ENCODE measurements at regions of chr18 and their contacts with region 1.

Region 1: DNA sequence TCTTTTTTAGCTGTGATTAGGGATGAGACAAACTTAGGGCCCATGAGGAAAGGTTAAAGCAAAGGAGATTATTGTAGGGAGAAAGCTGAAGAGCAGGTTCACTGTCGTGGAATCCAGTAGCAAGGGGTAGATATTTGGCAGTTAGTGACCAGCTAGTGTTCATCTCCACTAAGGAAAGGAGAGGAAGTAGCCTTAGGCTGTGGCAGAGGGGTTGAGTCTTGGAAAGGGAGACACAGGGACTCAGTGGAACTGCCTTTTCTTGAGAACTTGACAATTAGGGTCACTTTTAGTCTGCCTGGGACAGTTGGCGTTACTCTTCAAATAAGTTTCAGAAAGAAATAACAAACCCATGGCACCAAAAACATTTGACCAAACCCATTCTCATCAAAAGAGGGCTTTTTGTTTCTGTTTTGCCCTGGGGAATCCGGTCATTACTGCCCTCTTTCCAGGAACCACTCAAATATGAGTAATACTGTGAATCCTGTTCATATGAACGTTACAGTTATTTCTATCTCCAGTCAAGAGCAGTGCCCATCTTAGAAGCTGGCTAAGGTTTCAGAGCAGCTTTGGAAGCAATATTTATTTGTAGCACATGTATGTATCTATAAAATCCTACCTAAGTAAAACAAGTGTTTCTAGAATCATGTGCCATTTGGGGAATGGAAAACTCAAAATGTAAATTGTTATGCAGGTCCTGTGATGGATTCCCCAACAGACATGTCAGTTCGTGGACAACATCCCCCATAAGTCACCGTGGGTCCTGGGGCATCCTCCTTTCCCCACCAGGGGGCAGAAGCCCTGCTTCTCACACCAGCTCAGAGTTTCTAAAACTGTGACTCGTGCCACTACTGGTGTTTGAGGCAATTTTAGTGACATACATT is 77.3 kb upstream of the PHLPP1 start:
- DNase-seq: no peak

Region 2: DNA sequence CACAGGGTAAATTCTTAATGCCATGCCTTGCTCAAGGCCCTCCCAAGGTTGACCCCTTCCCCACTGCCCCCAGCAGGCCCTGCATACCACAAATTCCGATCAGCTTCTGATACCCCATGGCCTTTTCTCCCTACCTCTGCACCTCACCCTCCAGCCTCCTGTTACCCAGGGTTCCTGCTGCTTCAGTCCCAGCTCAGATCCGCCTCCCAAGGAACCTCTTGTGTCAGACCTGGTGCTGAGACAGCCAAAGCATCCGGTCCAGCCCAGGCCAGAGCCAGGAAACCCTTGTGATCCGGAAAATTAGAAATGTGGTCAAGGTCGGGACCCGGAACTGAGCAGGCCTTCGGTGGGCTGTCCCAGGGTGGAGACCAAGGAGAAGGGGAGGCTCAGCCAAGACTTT is 450.2 kb after region 1 on chr18:
- intact Hi-C with region 1: loop called in 1 of 2 experiments (anchors 5 kb)
- DNase-seq: no peak